GM10248 (cell line): ENCODE measurements at regions of chr2 and their contacts with region 1.

Region 1: DNA sequence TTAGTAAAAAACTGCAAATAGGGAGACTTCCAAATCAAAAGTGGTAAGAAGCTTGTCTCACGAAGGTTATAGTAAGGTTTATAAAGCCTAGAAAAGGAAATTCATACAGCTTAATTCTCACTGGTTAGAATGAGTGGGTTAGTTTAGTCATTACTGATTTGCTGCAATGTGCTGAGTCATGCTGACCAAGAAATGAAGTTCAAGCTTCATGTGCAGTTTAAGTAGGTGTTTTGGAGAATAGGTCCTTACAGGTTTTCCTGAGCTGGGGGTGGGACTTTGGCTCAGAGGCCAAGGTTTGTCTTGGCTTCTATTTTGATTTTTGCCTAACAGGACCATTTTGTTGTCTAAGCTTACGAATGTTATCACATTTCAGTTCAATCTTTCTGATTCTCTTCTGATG is 15.1 kb downstream of the CLIP4 start:
- DNase-seq: peak; percentile 27
- CTCF ChIP-seq: no peak

Region 2: GRCh38 chr2:29053670-29054400 is 76.5 kb before region 1 on chr2:
- CTCF ChIA-PET with region 1: no interaction called
- POLR2A ChIA-PET with region 1: no interaction called
- DNase-seq: no peak
- CTCF ChIP-seq: peak; percentile 40

Region 3: DNA sequence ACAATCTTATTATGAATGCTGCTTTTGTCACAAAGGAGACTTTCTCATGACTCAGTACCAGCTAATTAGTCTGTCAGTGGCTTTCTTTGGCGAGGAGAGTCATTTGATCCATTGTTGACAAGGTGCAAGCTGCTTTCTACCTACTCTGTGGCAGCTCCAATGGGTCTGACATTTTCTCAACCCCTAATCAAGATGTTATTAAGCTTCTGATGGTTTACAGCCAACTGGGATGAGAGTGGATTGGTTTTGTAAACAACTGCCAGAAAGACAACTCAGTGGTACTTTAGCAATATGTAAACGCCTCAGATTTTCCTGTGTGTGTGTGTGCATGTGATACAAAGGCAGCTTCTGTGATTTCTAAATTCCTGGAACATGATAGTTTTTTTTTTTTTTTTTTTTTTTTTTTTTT is 23.3 kb before region 1 on chr2:
- CTCF ChIA-PET with region 1: interaction called, 6 read pairs
- POLR2A ChIA-PET with region 1: interaction called, 10 read pairs
- DNase-seq: no peak
- CTCF ChIP-seq: no peak

Region 4: DNA sequence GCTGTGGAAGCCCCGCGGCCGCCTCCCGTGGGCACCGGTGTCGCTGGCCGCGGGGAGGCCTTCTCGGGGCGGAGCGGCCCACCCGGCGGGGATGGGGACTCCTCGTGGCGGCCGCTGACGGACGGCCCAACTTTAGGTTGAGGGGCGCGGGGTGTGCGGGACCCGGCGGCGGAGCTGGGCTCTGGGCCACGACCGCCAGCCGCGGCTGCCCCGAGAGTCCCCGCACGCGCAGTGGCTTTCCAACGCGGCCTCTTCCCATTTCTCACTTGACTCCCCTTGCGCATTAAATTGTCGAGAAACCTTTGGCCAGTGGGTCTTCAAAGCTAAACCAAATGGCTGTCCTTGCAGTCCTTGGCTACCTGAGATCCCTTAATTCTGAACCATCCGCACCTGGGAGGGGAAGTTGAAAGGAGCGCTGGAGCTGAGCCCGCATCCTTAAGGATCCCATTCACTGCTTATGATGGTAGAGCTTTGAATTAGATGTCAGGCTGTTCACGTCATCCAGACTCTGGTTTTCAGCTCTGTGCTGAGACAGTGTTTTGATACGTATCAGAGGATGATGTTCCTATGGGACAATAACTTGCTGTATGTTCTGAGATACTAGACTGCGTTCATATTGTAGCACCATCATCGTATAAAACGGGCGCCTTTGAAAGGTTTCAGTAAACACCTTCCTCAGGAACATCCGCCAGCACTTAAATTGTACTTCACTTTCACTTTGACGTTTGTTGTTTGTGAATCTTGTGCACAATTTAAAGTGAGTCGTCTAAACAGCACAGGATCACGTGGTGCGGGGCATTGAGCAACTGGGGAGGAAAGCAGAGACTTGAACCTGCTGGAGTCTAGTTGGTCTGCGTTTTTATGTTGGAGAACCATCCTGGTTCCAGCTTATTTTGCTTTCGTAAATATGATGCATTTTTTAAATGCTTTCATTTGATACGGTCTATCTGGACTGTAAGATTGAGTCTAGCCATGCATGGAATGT is 14.2 kb before region 1 on chr2:
- CTCF ChIA-PET with region 1: interaction called, 41 read pairs
- POLR2A ChIA-PET with region 1: interaction called, 6 read pairs
- DNase-seq: peak; percentile 54
- CTCF ChIP-seq: no peak

Region 5: DNA sequence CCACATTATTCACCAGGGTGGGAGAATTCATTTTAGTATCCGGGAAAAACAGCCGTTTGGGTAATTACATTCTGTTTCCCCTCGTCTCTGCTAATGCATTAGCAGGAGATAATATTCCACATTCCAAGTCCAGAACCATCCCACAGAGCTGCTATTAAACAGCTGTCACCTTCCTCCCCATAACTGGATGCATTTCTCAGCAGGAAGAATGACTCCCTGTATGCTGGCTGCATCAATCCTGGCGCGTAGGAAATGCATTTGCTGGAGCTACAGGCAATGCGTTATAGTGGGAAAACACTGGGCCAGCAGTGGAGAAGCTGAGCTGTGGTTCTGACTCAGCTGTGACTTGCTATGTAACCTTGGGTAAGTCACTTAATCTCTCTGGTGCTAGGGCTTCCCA is 230.9 kb after region 1 on chr2:
- CTCF ChIA-PET with region 1: no interaction called
- POLR2A ChIA-PET with region 1: no interaction called
- DNase-seq: no peak
- CTCF ChIP-seq: no peak